Gastrocnemius medialis (tissue), 4 donors: ENCODE measurements at regions of chr6 and their contacts with region 1.

Region 1: GRCh38 chr6:3887150-3887700 is 38.1 kb downstream of the FAM50B start:
- DNase-seq: peak in 1 of 2 donors; percentile 12
- ATAC-seq: no peak
- H3K4me3 ChIP-seq: no peak overlapping the region
- H3K27ac ChIP-seq: peak overlapping the region in 3 of 4 donors; percentile 48 to 70 (median 57)
- H3K4me1 ChIP-seq: peaks cover 36 to 46% of the 10 kb centered on the region in 2 donors
- H3K27me3 ChIP-seq: no peaks in the 10 kb centered on the region
- CTCF ChIP-seq: peak in 4 of 5 experiments; percentile 42 to 60 (median 52)
- POLR2A ChIP-seq: no peak

Region 2: GRCh38 chr6:3848925-3849605 is 38.2 kb before region 1 on chr6 and contains the start of gene FAM50B:
- in situ Hi-C with region 1: no loop called
- intact Hi-C with region 1: loop called (anchors 2 kb)
- DNase-seq: peak; percentile 85 to 92
- ATAC-seq: peak; percentile 87 to 91
- H3K4me3 ChIP-seq: peak within 1 kb of the TSS; percentile 58 to 68 (median 60)
- H3K27ac ChIP-seq: peak within 1 kb of the TSS; percentile 80 to 95 (median 89)
- H3K4me1 ChIP-seq: peaks cover 4 to 8% of the 10 kb centered on the region in 2 donors
- H3K27me3 ChIP-seq: no peaks in the 10 kb centered on the region
- CTCF ChIP-seq: peak; percentile 94 to 99 (median 97)
- POLR2A ChIP-seq: peak; percentile 10 to 61
- total RNA-seq, gene FAM50B: 4.4 to 19.6 (median 15.3) TPM

Region 3: GRCh38 chr6:3929281-3929798 is 42.1 kb after region 1 on chr6:
- in situ Hi-C with region 1: loop called in 2 of 4 experiments (anchors 5 to 10 kb)
- intact Hi-C with region 1: loop called (anchors 1 kb)
- DNase-seq: no peak
- ATAC-seq: peak in 1 of 2 donors; percentile 10
- H3K4me3 ChIP-seq: no peak overlapping the region
- H3K27ac ChIP-seq: peak overlapping the region; percentile 54 to 74 (median 65)
- H3K4me1 ChIP-seq: peaks cover 16 to 20% of the 10 kb centered on the region in 2 donors
- H3K27me3 ChIP-seq: no peaks in the 10 kb centered on the region
- CTCF ChIP-seq: no peak
- POLR2A ChIP-seq: no peak

Region 4: DNA sequence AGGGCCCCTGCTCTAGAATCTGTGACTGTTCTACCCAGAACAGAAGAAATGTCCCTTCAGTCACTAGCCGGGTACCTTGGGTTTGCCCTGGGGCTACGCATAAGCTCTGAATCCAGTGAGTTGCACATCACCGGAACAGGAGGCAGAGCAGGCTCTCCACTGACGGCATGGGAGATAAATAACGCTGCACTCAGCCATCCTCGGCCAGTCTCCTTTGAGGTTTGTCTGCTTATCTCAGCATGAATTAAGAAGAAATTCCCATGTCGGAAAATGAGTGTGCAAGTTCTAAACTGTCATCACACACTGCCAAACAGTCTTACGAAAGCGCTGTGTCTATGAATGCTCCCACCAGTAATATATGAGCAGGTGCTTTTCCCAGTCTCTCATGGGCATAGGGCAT is 52.7 kb after region 1 on chr6:
- in situ Hi-C with region 1: loop called in 1 of 4 experiments (anchors 10 kb)
- intact Hi-C with region 1: no loop called
- DNase-seq: no peak
- ATAC-seq: no peak
- H3K4me3 ChIP-seq: no peak overlapping the region
- H3K27ac ChIP-seq: no peak overlapping the region
- H3K4me1 ChIP-seq: no peaks in the 10 kb centered on the region
- H3K27me3 ChIP-seq: peaks cover 0 to 7% (median 6%) of the 10 kb centered on the region in 3 donors
- CTCF ChIP-seq: no peak
- POLR2A ChIP-seq: no peak